ENCODE measurements at regions of chr18 and their contacts with region 1.

Region 1: GRCh38 chr18:59139371-59140298 is at the start of gene SEC11C:
- DNase-seq: peak; percentile 99
- H3K4me3 ChIP-seq: peak within 1 kb of the TSS; percentile 67 to 91 (median 74)
- H3K27ac ChIP-seq: peak within 1 kb of the TSS; percentile 77 to 83 (median 78)
- H3K4me1 ChIP-seq: peaks cover 8 to 20% (median 14%) of the 10 kb centered on the region in 4 donors
- H3K27me3 ChIP-seq: peaks cover 0 to 7% (median 0%) of the 10 kb centered on the region in 4 donors
- CTCF ChIP-seq: no peak
- EP300 ChIP-seq: no peak
- POLR2A ChIP-seq: no peak
- total RNA-seq, gene SEC11C: 20.5 to 26.4 (median 22.2) TPM

Region 2: GRCh38 chr18:58671111-58671631 is 468.5 kb before region 1 on chr18 and contains the start of gene MALT1:
- intact Hi-C with region 1: loop called (anchors 10 kb)
- DNase-seq: peak; percentile 97
- H3K4me3 ChIP-seq: peak within 1 kb of the TSS; percentile 86 to 96 (median 92)
- H3K27ac ChIP-seq: peak within 1 kb of the TSS; percentile 96 to 97 (median 96)
- H3K4me1 ChIP-seq: peaks cover 14 to 22% (median 16%) of the 10 kb centered on the region in 4 donors
- H3K27me3 ChIP-seq: no peaks in the 10 kb centered on the region
- CTCF ChIP-seq: no peak
- EP300 ChIP-seq: no peak
- POLR2A ChIP-seq: peak; percentile 71
- total RNA-seq, gene MALT1: 18.3 to 27.5 (median 22.6) TPM

Region 3: DNA sequence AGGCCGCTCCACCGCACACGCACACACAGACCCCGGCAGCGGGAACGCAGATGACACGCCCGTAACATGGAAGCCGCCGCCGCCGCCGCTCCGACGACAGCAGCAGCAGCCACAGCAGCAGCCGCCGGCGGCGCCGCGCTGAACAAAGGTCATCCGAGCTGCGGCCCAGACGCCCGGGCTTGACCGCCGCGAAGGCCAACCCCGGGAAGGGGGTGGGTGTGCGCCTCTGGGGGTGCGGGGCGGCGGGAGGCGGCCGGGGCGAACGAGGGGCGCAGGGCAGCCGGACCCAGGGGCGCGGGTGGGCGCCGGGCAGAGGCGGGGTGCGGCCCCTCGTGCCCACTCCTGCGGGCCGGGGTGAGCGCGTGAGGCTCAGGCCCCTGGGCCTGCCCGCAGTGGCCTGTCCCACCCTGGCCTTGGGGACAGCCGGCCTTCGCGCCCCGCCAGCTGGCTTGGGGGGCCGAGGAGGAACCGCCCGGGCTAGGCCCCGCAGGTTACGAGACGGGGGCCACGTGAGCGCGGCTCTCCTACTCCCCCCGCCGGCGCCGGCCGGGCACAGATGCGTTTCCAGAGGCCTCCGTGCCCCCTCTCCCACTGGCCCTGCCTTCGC is 276.0 kb before region 1 on chr18:
- intact Hi-C with region 1: loop called (anchors 5 kb)
- DNase-seq: no peak
- H3K4me3 ChIP-seq: peak overlapping the region; percentile 61 to 72 (median 66)
- H3K27ac ChIP-seq: peak overlapping the region; percentile 92 to 96 (median 96)
- H3K4me1 ChIP-seq: peaks cover 68 to 87% (median 77%) of the 10 kb centered on the region in 4 donors
- H3K27me3 ChIP-seq: no peaks in the 10 kb centered on the region
- CTCF ChIP-seq: no peak
- EP300 ChIP-seq: no peak
- POLR2A ChIP-seq: no peak